ENCODE measurements at regions of chr13 and their contacts with region 1.

Region 1: DNA sequence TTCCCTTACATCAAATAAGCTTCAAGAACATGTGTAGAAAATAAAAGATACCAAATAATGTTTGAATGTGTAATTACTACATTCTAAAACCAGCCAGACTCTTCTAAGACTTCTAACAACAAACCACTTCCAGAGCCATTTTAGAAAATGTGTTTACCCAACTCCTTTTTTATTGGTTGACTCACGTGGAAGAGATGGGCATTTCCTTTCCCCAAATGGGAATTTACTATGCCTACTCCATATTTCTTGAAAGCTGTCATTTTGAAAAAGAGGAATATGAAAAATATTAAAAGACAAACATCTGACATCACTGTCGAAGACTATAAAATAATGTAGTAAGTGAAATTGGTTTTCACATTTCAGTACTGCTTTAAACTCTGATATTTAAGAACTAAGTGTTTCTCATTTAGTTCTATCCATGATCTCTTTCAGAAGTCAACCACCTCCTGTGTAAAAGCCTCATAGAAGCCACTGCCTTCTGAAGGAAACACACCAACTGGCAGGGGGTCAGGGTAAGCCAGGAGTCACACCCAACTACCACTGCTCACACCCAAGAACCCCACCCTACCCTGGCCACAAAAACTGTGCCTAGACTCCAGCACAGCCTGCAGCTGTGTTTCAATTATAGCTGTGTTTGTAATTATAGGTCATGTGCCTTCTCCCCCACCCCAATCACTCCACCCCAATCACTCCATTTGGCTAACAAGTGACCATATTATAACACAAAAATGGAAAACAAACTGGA is 86.8 kb downstream of the UBL3 start:
- DNase-seq: peak in 1 of 5 donors; percentile 2
- H3K4me3 ChIP-seq: no peak overlapping the region
- H3K4me3 Mint-ChIP-seq: no peak overlapping the region
- H3K27ac ChIP-seq: no peak overlapping the region
- H3K27ac Mint-ChIP-seq: peak overlapping the region in 6 of 8 donors; percentile 6 to 81 (median 74)
- H3K4me1 ChIP-seq: no peaks in the 10 kb centered on the region
- H3K4me1 Mint-ChIP-seq: peaks cover 17 to 31% (median 27%) of the 10 kb centered on the region in 3 donors
- H3K27me3 ChIP-seq: no peaks in the 10 kb centered on the region
- H3K27me3 Mint-ChIP-seq: no peaks in the 10 kb centered on the region

Region 2: GRCh38 chr13:29654843-29655547 is 108.6 kb before region 1 on chr13:
- CTCF ChIA-PET with region 1: no interaction called
- POLR2A ChIA-PET with region 1: no interaction called
- DNase-seq: no peak
- H3K4me3 ChIP-seq: no peak overlapping the region
- H3K4me3 Mint-ChIP-seq: no peak overlapping the region
- H3K27ac ChIP-seq: no peak overlapping the region
- H3K27ac Mint-ChIP-seq: no peak overlapping the region
- H3K4me1 ChIP-seq: no peaks in the 10 kb centered on the region
- H3K4me1 Mint-ChIP-seq: peaks cover 0 to 3% (median 0%) of the 10 kb centered on the region in 3 donors
- H3K27me3 ChIP-seq: no peaks in the 10 kb centered on the region
- H3K27me3 Mint-ChIP-seq: peaks cover 7 to 20% of the 10 kb centered on the region in 2 donors

Region 3: DNA sequence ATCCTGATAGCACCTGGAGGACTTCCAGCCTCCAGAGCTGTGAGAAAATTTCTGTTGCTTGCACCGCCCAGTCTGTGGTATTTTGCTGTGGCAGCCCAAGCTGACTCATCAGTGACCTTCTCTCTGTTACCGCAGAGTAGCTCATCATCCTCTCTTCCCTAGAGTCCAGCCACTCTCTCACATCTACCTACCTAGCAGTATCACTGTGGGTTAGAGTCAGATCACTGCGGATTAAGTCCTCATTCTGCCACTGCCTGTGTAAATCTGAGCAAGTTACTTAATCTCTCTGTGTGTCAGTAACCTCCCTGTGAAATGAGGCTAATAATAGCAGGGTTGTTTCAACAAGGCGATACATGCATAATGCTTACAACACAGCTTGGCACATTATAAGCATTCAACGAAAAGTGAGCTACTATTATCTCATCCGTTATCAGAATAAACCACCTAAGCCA is 813.8 kb after region 1 on chr13:
- CTCF ChIA-PET with region 1: no interaction called
- POLR2A ChIA-PET with region 1: interaction called, 11 read pairs
- DNase-seq: peak in 4 of 5 donors; percentile 13 to 64 (median 28)
- H3K4me3 ChIP-seq: no peak overlapping the region
- H3K4me3 Mint-ChIP-seq: peak overlapping the region in 6 of 7 donors; percentile 4 to 71 (median 40)
- H3K27ac ChIP-seq: no peak overlapping the region
- H3K27ac Mint-ChIP-seq: peak overlapping the region in 7 of 8 donors; percentile 2 to 73 (median 22)
- H3K4me1 ChIP-seq: peaks cover 24% of the 10 kb centered on the region
- H3K4me1 Mint-ChIP-seq: peaks cover 26 to 37% (median 32%) of the 10 kb centered on the region in 3 donors
- H3K27me3 ChIP-seq: peaks cover 4% of the 10 kb centered on the region
- H3K27me3 Mint-ChIP-seq: no peaks in the 10 kb centered on the region